ENCODE measurements at regions of chr10 and their contacts with region 1.

Region 1: DNA sequence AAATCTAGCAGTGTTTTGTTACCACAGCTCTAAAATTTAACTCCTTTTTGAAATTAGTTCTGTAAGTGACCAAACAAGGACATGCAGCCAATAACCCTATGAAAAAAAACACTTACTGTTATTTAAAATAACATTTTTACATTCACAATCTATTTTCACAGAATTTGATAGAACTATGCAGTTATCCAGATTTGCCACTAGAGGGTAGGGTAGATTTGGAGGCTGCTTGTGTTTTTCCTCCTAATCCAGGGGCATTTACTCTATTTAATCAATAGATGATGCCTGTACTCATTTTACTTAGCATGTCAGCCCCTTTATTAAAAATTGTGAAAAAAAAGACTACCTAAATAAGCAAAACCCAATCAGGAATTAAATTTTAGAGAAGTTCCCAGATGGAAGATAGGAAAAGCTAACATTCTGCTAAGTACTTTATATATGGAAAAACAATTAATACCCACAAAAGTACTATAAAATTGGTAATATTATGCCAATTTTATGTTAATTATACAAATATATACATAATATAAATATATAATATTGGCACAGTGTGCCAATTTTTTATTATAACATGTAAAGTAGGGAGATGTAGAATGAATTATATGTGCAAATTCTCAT is 18.1 kb upstream of the LIPK start:
- DNase-seq: no peak
- ATAC-seq: peak; percentile 58
- H3K4me3 Mint-ChIP-seq: no peak overlapping the region
- H3K27ac Mint-ChIP-seq: no peak overlapping the region
- H3K4me1 Mint-ChIP-seq: no peaks in the 10 kb centered on the region
- H3K27me3 Mint-ChIP-seq: peaks cover 10% of the 10 kb centered on the region
- CTCF ChIP-seq: peak; percentile 80

Region 2: DNA sequence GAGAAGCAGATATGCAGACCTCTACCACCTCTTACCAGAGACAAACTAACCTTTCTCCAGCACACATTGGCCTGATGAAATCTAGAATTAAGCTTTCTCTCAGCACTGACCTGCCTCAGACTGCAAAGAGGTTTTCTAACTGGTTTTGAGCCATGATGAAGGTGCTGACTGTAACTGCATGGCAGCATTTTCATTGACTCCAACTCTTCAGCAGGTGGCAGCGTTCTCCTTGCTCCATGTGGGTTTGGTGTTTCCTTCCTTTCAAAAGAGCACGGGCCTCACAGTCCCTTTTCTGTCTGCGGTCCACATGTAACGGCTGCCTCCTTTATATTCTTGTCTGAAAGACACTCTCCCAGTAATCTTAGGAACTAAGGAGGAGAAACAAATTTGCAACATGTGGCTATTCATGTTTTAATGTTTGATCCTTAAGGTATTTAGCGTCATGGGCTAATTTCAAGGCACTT is 837.2 kb before region 1 on chr10:
- CTCF ChIA-PET with region 1: no interaction called
- POLR2A ChIA-PET with region 1: no interaction called
- intact Hi-C with region 1: loop called (anchors 10 kb)
- DNase-seq: no peak
- ATAC-seq: peak; percentile 77
- H3K4me3 Mint-ChIP-seq: no peak overlapping the region
- H3K27ac Mint-ChIP-seq: no peak overlapping the region
- H3K4me1 Mint-ChIP-seq: peaks cover 5% of the 10 kb centered on the region
- H3K27me3 Mint-ChIP-seq: no peaks in the 10 kb centered on the region
- CTCF ChIP-seq: no peak

Region 3: GRCh38 chr10:88243836-88244730 is 443.9 kb before region 1 on chr10:
- CTCF ChIA-PET with region 1: no interaction called
- POLR2A ChIA-PET with region 1: no interaction called
- intact Hi-C with region 1: no loop called
- DNase-seq: no peak
- ATAC-seq: no peak
- H3K4me3 Mint-ChIP-seq: no peak overlapping the region
- H3K27ac Mint-ChIP-seq: no peak overlapping the region
- H3K4me1 Mint-ChIP-seq: peaks cover 17% of the 10 kb centered on the region
- H3K27me3 Mint-ChIP-seq: no peaks in the 10 kb centered on the region
- CTCF ChIP-seq: no peak

Region 4: DNA sequence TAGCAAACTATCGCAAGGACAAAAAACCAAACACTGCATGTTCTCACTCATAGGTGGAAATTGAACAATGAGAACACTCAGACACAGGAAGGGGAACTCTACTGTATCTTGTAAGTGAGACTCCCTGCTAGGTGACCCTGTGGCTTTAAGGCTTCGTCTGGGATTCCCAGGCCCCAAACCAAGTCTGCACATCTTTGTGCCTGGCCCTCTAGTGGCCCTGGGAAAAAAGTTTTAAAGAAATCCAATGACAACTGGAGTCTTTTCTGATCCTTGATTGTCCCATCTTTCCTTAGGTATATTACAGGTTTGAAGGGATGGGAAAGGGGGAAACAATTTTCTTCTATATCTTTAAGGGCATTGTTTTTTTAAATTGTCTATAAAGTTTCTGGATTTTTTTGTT is 104.0 kb after region 1 on chr10:
- CTCF ChIA-PET with region 1: no interaction called
- POLR2A ChIA-PET with region 1: no interaction called
- intact Hi-C with region 1: loop called (anchors 5 kb)
- DNase-seq: no peak
- ATAC-seq: no peak
- H3K4me3 Mint-ChIP-seq: no peak overlapping the region
- H3K27ac Mint-ChIP-seq: no peak overlapping the region
- H3K4me1 Mint-ChIP-seq: no peaks in the 10 kb centered on the region
- H3K27me3 Mint-ChIP-seq: no peaks in the 10 kb centered on the region
- CTCF ChIP-seq: no peak

Region 5: DNA sequence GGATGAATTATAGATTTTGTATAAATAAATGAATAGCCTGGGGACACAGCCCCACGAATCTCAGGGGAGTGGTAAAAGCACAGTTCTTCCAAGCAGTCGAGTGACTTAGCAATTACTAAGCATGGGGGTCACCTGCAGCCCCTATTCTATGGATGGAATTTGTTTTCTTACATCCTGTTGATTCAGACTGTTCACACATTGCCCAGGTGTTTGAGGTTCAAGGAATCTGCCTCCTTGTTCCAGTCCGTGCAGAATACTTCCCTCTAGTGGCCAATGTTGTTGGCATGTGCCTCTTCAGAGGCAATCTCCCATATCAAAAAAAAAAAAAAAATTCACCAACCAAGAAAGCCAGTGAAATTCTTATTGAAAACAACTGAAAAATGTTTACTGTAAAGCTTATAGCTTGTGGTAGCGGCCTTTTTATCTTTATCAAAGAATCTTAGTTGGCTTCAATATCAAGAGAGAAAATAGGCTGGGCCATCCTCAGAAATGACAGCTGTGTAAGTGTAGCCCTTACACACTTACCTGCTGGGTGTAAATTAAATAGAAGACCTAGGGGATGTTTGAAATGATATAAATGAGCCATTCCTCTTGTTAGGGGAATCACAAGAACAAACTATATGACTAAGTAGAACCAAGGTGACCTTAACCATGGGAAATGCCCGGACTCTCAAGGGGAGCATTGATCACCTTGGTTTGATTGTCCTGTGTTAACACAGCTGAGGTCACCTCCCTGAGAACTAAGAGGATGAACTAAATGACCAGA is 122.4 kb after region 1 on chr10:
- CTCF ChIA-PET with region 1: interaction called, 5 read pairs
- POLR2A ChIA-PET with region 1: no interaction called
- intact Hi-C with region 1: loop called (anchors 1 kb)
- DNase-seq: no peak
- ATAC-seq: peak; percentile 50
- H3K4me3 Mint-ChIP-seq: no peak overlapping the region
- H3K27ac Mint-ChIP-seq: no peak overlapping the region
- H3K4me1 Mint-ChIP-seq: peaks cover 5% of the 10 kb centered on the region
- H3K27me3 Mint-ChIP-seq: no peaks in the 10 kb centered on the region
- CTCF ChIP-seq: no peak

Region 6: GRCh38 chr10:89207181-89207800 is 519.3 kb after region 1 on chr10 and contains the start of gene CH25H:
- CTCF ChIA-PET with region 1: no interaction called
- POLR2A ChIA-PET with region 1: no interaction called
- intact Hi-C with region 1: loop called (anchors 5 kb)
- DNase-seq: no peak
- ATAC-seq: peak; percentile 65
- H3K4me3 Mint-ChIP-seq: peak within 1 kb of the TSS; percentile 83
- H3K27ac Mint-ChIP-seq: no peak within 1 kb of the TSS
- H3K4me1 Mint-ChIP-seq: peaks cover 27% of the 10 kb centered on the region
- H3K27me3 Mint-ChIP-seq: peaks cover 47% of the 10 kb centered on the region
- CTCF ChIP-seq: no peak
- total RNA-seq, gene CH25H: not detected in 2 replicates